Right lobe of liver (tissue), 6 donors: ENCODE measurements at regions of chr17 and their contacts with region 1.

Region 1: DNA sequence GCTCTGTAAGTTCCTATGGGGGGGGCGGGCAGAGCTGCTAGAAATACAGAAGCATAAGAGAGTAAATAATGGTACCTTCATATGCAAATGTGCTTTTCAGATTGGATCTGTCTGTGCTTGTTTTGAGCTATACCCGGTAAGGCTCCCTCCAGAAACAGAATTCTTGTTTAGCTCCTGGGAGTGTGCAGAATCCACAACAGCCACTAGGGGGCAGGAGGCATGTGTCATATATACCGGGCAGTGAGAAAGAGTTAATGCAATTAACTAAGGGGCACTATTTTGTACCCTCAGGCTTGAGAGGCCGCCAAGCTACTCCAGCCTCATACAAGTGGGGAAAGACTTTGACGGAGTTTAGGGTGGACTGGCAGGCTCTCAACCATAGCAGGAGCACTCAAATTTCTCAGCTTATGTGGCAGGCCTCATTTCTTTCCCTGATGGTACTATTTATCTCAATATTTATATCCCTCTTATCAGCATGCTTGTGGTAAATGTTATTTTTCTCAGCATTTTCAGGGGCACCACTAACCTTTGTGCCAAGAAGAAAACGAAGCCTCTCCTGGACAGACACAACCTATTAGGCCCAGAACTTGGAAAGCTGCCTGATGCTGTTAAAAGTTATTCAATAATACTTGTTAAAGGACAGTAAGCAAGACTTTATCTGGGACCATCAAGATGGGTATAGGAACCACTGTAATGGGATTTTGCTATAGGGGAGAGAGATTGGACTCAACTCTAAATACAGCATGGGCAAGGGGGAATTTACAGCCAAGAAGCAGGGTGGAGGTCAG is 10.7 kb upstream of the CENPV start:
- DNase-seq: peak; percentile 68 to 76 (median 69)
- ATAC-seq: peak; percentile 93 to 97 (median 95)
- H3K4me3 ChIP-seq: no peak overlapping the region
- H3K27ac ChIP-seq: no peak overlapping the region
- H3K4me1 ChIP-seq: peaks cover 0 to 6% (median 0%) of the 10 kb centered on the region in 4 donors
- H3K27me3 ChIP-seq: no peaks in the 10 kb centered on the region
- CTCF ChIP-seq: peak; percentile 86 to 94 (median 94)
- POLR2A ChIP-seq: no peak

Region 2: DNA sequence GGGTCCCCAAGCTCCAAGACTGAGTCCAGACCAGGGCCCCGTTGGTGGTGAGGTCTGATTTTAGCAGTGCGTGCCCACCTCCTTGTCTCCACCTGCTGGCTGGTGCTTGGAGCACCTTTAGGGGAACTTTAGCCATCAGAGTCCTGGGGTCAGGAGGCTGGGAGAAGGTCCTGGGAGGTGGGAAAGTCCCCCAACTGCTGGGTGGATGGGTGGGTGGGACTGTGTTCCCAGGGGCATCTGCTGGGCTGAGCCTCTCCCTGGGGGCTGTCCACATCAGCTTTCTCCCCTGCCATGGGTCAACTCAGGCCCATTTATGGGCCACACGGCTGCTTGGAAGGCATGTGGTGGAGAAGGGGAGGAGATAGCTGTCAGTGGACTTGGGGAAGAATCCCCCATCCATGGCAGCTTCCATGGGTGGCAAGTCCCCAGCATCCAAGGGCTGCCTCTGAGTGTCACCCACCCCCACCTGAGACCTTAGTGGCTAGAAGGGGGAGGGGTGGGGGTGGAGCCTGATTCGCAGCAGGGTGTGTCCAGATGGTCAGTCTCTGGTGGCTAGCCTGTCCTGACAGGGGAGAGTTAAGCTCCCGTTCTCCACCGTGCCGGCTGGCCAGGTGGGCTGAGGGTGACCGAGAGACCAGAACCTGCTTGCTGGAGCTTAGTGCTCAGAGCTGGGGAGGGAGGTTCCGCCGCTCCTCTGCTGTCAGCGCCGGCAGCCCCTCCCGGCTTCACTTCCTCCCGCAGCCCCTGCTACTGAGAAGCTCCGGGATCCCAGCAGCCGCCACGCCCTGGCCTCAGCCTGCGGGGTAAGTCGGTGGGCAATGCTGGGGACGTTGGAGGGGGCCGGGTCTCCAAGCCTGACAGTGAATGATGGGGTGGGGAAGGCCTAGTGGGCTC is 51.3 kb after region 1 on chr17 and contains the start of gene TRPV2:
- intact Hi-C with region 1: loop called in 1 of 2 experiments (anchors 10 kb)
- DNase-seq: peak in 1 of 3 donors; percentile 57
- ATAC-seq: peak; percentile 77 to 86 (median 78)
- H3K4me3 ChIP-seq: peak within 1 kb of the TSS; percentile 40 to 52 (median 41)
- H3K27ac ChIP-seq: peak within 1 kb of the TSS; percentile 57 to 72 (median 70)
- H3K4me1 ChIP-seq: no peaks in the 10 kb centered on the region
- H3K27me3 ChIP-seq: no peaks in the 10 kb centered on the region
- CTCF ChIP-seq: peak; percentile 45 to 60 (median 57)
- POLR2A ChIP-seq: no peak
- total RNA-seq, gene TRPV2: 3.3 to 8.2 (median 4.8) TPM

Region 3: DNA sequence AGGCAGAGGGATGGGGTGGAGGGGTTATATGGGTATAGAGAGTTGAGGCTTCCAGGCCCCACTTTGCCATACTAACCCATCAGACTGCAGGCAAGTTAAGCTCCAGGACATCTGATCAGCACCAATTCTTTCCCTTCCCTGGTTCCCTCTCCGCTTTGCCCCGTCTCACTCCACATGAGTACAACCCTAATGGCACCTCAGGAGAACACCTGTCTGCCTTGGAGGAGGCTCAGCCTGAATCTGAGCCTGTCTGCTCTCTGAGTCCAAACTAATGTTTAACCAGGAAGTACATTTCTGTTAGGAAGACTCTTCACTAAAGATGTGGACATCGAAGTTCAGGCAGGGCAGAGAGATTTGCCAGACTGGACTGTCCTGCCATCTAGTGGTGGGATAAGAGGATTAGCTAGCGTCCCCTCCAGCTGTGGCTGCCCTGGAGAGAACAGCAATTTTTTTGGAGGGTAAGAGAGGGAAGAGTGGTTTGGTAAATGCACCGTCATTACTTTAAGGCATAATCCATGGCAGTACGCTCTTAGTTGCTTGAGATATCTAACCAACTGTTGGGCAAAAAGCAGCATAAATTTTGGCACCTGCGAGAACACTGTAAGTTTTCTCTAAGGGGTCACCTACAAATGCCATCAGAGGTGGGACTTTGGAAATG is 157.3 kb after region 1 on chr17:
- intact Hi-C with region 1: loop called in 1 of 2 experiments (anchors 10 kb)
- DNase-seq: peak; percentile 58 to 79 (median 68)
- ATAC-seq: peak; percentile 98 to 100 (median 100)
- H3K4me3 ChIP-seq: no peak overlapping the region
- H3K27ac ChIP-seq: no peak overlapping the region
- H3K4me1 ChIP-seq: peaks cover 0 to 5% (median 2%) of the 10 kb centered on the region in 4 donors
- H3K27me3 ChIP-seq: no peaks in the 10 kb centered on the region
- CTCF ChIP-seq: peak; percentile 92 to 95 (median 95)
- POLR2A ChIP-seq: no peak